Dorsolateral prefrontal cortex (tissue), 120 donors: ENCODE measurements at regions of chr4 and their contacts with region 1.

Region 1: DNA sequence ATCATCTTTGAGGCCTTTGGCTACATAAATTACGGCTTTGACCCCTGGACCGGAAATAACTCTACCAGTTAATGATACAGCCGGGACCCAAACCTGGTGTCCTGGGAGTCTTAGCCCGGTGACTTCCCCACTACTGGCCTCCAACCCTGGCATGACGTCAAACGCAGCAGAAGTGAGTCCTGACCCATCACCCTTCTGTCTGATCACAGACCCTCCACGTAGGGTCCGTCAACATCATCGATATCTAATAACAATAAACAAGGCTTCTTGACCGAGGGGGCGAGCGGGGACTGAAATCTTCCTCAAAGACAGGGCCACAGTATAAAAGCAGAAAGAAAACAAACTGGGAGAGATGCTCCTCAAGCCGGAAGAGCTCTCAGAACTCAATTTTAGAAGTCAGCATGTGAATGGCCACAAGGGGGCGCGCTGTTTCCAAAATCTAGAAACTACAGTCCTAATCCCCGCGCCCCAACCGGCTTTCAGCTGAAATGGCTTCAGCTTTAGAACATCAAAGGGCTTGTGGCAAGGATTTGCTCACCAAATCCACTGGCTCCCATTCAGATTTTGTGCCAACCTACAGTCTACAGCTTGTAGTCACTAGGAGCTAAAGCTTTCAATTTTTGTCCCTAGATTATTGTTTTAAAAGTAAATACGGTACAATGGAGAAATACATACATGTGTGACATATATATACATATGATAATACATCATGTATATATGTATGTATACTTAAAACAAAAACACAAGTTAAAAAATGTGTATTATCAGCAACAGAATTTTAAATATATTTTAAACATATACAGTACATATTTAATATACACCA is 46.4 kb upstream of the ENPP6 start:
- DNase-seq: peak; percentile 87 to 97 (median 94)
- H3K4me3 ChIP-seq: peak overlapping the region in 11 of 59 donors; percentile 6 to 45 (median 19)
- H3K27ac ChIP-seq: peak overlapping the region in 45 of 59 donors; percentile 8 to 86 (median 66)
- H3K27me3 ChIP-seq: no peaks in the 10 kb centered on the region
- CTCF ChIP-seq: peak; percentile 90 to 99 (median 96)

Region 2: GRCh38 chr4:184177271-184177670 is 86.8 kb before region 1 on chr4:
- intact Hi-C with region 1: no loop called
- DNase-seq: no peak
- H3K4me3 ChIP-seq: no peak overlapping the region
- H3K27ac ChIP-seq: no peak overlapping the region
- H3K27me3 ChIP-seq: no peaks in the 10 kb centered on the region
- CTCF ChIP-seq: no peak

Region 3: GRCh38 chr4:184343502-184344177 is 79.5 kb after region 1 on chr4:
- intact Hi-C with region 1: loop called in 1 of 2 experiments (anchors 5 kb)
- DNase-seq: peak; percentile 37 to 89 (median 82)
- H3K4me3 ChIP-seq: peak overlapping the region; percentile 51 to 94 (median 72)
- H3K27ac ChIP-seq: peak overlapping the region in 57 of 59 donors; percentile 5 to 89 (median 75)
- H3K27me3 ChIP-seq: no peaks in the 10 kb centered on the region
- CTCF ChIP-seq: peak in 9 of 56 donors; percentile 13 to 24 (median 18)

Region 4: DNA sequence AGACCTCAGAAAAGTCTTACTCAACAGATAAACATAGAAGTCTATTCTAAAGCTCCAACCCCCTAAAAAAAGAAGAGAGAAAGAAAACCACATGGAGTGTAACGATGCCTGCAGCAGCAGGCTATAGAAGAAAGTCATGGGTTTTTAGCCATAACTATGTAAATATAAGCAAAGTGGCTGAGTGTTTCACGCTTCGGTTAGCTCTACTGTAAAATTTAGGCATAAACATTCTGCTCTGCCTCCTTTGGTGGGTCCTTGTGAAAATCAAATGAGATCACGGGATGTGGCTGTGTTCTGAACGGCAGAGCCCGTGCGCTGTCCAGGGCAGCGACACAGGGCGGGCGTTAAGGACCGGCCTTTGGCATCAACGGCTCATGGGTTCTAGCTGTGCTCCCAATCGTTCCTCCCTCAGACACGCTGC is 131.9 kb after region 1 on chr4:
- intact Hi-C with region 1: loop called in 1 of 2 experiments (anchors 10 kb)
- DNase-seq: no peak
- H3K4me3 ChIP-seq: peak overlapping the region in 4 of 59 donors; percentile 1 to 17 (median 10)
- H3K27ac ChIP-seq: peak overlapping the region; percentile 10 to 91 (median 80)
- H3K27me3 ChIP-seq: no peaks in the 10 kb centered on the region
- CTCF ChIP-seq: no peak

Region 5: DNA sequence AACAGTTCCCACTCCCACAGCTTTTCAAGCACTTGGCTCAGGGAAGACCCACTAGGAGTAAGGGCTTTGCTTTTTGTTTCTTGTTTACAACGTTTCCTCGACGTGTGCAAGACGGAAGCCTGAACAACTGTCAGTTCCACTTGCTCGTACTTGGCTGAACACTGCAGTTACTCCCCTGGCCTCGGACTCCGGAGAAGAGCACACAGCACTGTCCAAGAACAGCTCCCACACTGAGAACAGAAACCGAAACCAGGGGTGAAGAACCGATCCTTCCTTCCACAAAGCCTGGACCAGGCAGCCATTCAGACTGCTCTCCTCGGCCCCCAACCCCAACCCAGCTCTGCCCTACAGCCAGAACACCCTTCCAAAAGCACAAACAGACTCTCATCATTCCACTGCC is 184.7 kb after region 1 on chr4:
- intact Hi-C with region 1: no loop called
- DNase-seq: peak in 2 of 10 donors; percentile 48 to 53
- H3K4me3 ChIP-seq: peak overlapping the region; percentile 10 to 69 (median 47)
- H3K27ac ChIP-seq: peak overlapping the region; percentile 19 to 91 (median 81)
- H3K27me3 ChIP-seq: no peaks in the 10 kb centered on the region
- CTCF ChIP-seq: no peak

Region 6: GRCh38 chr4:184649026-184649970 is 385.2 kb after region 1 on chr4 and contains the starts of genes CASP3 and PRIMPOL:
- intact Hi-C with region 1: loop called (anchors 5 to 10 kb)
- DNase-seq: peak; percentile 93 to 99 (median 96)
- H3K4me3 ChIP-seq: peak within 1 kb of the TSS; percentile 60 to 97 (median 89)
- H3K27ac ChIP-seq: peak within 1 kb of the TSS; percentile 55 to 98 (median 94)
- H3K27me3 ChIP-seq: no peaks in the 10 kb centered on the region
- CTCF ChIP-seq: peak in 51 of 56 donors; percentile 14 to 67 (median 44)
- total RNA-seq, gene CASP3: 6.4 to 17.2 (median 12.2) TPM
- total RNA-seq, gene PRIMPOL: 9.5 to 30.5 (median 17.5) TPM

Region 7: DNA sequence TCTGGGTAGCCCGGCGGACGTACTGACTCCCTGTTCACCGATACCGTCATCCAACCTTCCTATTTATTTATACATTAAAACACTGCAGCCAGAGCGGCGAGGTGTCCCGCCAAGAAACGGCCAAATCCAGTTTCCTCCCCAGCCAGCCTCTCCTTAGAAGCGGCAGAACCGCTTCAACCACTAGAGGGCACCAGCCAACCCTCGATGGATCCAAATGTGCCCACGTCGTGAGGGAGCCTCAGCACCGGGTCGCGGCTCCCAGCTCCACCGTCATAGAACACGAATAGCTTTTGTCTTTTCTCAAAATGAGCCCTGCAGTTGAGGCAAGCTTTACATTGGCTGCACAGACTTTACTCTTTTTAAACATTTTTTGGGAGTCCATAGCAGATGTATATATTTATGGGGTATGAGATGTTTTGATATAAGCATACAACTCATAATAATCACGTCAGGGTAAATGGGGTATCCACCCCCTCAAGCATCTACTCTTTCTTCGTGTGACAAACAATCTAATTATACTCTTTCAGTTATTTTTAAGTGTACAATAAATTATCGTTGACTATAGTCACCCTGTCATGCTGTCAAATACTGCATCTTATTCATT is 741.2 kb after region 1 on chr4:
- intact Hi-C with region 1: loop called in 1 of 2 experiments (anchors 10 kb)
- DNase-seq: peak; percentile 63 to 85 (median 79)
- H3K4me3 ChIP-seq: peak overlapping the region; percentile 1 to 69 (median 43)
- H3K27ac ChIP-seq: no peak overlapping the region
- H3K27me3 ChIP-seq: peaks cover 0 to 10% (median 0%) of the 10 kb centered on the region in 45 donors
- CTCF ChIP-seq: peak; percentile 68 to 96 (median 89)